ENCODE measurements at regions of chr17 and their contacts with region 1.

Region 1: GRCh38 chr17:63741221-63742049 is at the start of gene STRADA:
- DNase-seq: peak; percentile 94 to 99 (median 97)
- H3K4me3 ChIP-seq: peak within 1 kb of the TSS; percentile 65 to 100 (median 91)
- H3K27ac ChIP-seq: peak within 1 kb of the TSS; percentile 40 to 97 (median 88)
- H3K27me3 ChIP-seq: no peaks in the 10 kb centered on the region
- CTCF ChIP-seq: peak in 31 of 56 donors; percentile 6 to 57 (median 30)
- total RNA-seq, gene STRADA: 47.3 to 105 (median 79.1) TPM

Region 2: DNA sequence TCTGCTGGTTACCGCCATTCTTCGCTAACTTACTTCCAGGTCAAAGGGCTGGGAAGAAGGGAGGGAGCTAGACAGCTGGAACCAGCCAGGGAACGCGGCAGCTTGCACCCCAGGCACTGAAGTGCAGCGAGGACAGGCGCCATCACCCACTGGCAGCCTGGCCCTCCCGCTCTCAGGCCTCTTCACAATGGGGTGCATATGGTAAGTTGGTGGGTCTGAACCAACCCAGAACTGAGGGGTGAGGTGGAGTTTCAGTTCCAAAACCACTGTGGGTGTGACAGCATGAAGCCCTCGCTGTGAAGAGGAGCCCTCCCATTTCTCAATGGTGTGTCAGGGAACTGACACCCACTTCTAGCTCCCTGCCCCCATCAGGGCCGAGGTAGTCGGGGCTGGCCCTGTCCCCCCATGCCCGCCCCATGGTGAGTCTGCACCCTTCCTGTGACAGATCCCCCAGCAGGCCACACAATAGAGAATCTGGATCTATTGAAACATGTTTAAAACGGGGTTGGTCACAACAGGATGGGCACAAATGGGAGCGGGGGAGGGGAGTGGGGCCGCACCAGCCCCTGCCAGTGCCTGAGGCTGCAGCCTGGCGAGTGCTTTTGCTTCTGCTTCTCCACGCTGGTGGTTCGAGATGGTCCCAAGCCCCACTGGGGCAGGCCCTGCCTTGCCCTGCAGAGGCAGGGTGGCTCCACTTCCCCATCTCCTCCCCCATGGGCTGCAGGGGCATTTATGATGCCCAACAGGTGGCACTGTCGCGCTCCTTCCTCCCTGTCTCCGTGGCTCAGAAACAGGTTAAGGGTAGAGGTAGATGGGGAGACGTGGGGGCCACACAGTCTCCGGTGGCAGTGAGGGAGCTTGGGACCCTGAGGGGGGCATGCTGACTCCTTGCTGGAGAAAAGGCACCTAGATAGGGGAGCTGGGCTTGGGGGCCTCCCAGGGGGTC is 43.8 kb before region 1 on chr17:
- intact Hi-C with region 1: loop called in 1 of 2 experiments (anchors 2 kb)
- DNase-seq: no peak
- H3K4me3 ChIP-seq: peak overlapping the region in 27 of 59 donors; percentile 8 to 72 (median 61)
- H3K27ac ChIP-seq: peak overlapping the region in 51 of 59 donors; percentile 19 to 95 (median 67)
- H3K27me3 ChIP-seq: no peaks in the 10 kb centered on the region
- CTCF ChIP-seq: peak in 40 of 56 donors; percentile 8 to 46 (median 24)

Region 3: DNA sequence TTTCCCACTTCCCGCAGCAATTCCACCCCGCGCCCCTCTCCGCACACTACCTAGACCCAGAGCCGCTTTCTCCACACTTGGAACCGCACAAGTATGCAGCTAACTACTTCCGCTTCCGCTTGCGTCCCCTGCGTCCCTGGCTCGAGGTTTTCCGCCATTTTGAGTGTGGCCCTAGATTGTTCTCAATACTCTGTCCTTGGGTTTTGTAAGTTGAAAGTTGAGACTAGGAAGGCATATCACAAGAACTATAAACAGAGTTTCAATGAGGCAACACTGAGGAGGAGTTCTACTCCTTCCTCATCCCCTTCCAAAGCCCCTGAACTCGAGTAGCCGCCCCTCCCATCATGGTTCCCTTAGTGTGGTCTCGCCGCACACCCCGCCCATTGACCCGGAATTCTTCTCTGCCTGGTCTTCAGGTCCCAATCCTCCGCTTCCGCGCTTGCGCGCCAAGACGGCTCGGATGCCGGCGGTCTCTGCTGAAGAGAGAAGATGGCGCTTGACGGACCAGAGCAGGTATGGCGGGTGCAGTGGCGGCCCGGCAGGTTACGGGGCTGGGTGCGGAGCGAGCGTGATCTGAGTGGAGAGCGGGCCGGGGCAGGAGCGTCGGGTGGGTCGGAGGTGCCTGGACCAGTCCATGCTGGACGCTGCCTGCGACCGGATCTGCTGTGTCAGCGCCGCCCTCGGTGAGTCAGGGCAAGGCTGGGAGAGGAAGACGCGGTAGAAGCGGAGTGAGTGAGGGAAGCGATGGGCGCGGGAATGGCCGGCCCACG is 85.8 kb after region 1 on chr17 and contains the starts of genes FTSJ3 and PSMC5:
- intact Hi-C with region 1: loop called in 1 of 2 experiments (anchors 5 kb)
- DNase-seq: peak; percentile 96 to 98 (median 97)
- H3K4me3 ChIP-seq: peak within 1 kb of the TSS; percentile 67 to 99 (median 92)
- H3K27ac ChIP-seq: peak within 1 kb of the TSS; percentile 80 to 100 (median 98)
- H3K27me3 ChIP-seq: no peaks in the 10 kb centered on the region
- CTCF ChIP-seq: peak in 52 of 56 donors; percentile 16 to 62 (median 46)
- total RNA-seq, gene FTSJ3: 13.7 to 39.6 (median 25.0) TPM
- total RNA-seq, gene PSMC5: 89.5 to 186 (median 136) TPM

Measured in dorsolateral prefrontal cortex (tissue), 120 donors.